ENCODE measurements at regions of chr6 and their contacts with region 1.

Region 1: GRCh38 chr6:166266336-166266735 is 41.9 kb downstream of the PRR18 start:
- DNase-seq: no peak
- H3K4me3 ChIP-seq: no peak overlapping the region
- H3K27ac ChIP-seq: no peak overlapping the region
- H3K4me1 ChIP-seq: no peaks in the 10 kb centered on the region
- H3K27me3 ChIP-seq: peaks cover 8% of the 10 kb centered on the region
- CTCF ChIP-seq: no peak

Region 2: DNA sequence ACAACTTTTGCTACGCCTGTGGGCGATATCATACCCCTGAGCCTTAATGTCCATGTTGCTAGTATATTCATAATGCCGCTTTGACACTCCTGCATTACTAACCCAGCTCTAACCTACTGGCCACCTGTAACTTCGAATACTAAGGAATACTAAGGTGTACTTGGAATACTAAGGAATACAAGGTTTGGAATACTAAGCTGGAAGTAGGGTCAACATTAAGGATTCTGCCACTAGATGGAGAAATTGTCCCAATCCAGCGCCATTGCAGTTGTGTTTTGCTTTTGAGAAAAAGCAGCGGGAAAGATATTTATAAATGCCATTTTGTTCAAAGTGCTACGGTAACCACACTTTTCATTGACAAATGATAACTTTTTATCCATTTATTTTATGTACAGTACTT is 109.4 kb before region 1 on chr6:
- CTCF ChIA-PET with region 1: no interaction called
- POLR2A ChIA-PET with region 1: no interaction called
- intact Hi-C with region 1: loop called (anchors 5 kb)
- DNase-seq: peak; percentile 35
- H3K4me3 ChIP-seq: no peak overlapping the region
- H3K27ac ChIP-seq: no peak overlapping the region
- H3K4me1 ChIP-seq: no peaks in the 10 kb centered on the region
- H3K27me3 ChIP-seq: peaks cover 10% of the 10 kb centered on the region
- CTCF ChIP-seq: peak; percentile 54

Region 3: GRCh38 chr6:166502446-166502845 is 236.1 kb after region 1 on chr6:
- CTCF ChIA-PET with region 1: no interaction called
- POLR2A ChIA-PET with region 1: no interaction called
- intact Hi-C with region 1: no loop called
- DNase-seq: no peak
- H3K4me3 ChIP-seq: no peak overlapping the region
- H3K27ac ChIP-seq: no peak overlapping the region
- H3K4me1 ChIP-seq: no peaks in the 10 kb centered on the region
- H3K27me3 ChIP-seq: no peaks in the 10 kb centered on the region
- CTCF ChIP-seq: no peak

Measured in A673 (cell line).